ENCODE measurements at regions of chr1 and their contacts with region 1.

Region 1: DNA sequence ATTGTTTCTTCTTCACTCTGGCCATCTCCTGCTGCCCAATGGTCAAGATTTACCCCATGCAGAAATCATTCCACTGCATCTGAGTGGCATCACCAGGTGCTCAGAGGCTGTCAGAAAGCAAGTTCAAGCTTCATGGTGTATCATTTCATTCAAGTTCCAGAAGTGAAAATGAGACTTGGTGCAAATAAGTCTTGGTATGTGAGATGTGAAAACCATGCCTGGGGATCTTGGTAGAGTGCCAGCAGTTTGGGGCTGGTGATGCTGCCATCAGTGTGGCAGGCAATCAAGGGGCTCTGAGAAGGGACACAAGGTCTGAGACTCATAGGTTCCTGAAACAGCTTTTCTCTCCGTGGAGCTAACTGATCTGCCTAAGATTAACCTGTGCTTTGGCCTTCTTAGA is 52.0 kb downstream of the CD2 start:
- DNase-seq: peak; percentile 91
- H3K4me3 Mint-ChIP-seq: peak overlapping the region; percentile 79
- H3K27ac Mint-ChIP-seq: peak overlapping the region; percentile 99
- H3K4me1 Mint-ChIP-seq: peaks cover 78% of the 10 kb centered on the region
- H3K27me3 Mint-ChIP-seq: no peaks in the 10 kb centered on the region

Region 2: GRCh38 chr1:116754198-116754977 is 51.9 kb before region 1 on chr1 and contains the start of gene CD2:
- CTCF ChIA-PET with region 1: interaction called, 5 read pairs
- POLR2A ChIA-PET with region 1: interaction called, 1,099 read pairs
- intact Hi-C with region 1: loop called (anchors 1 kb)
- DNase-seq: peak; percentile 78
- H3K4me3 Mint-ChIP-seq: peak within 1 kb of the TSS; percentile 99
- H3K27ac Mint-ChIP-seq: peak within 1 kb of the TSS; percentile 99
- H3K4me1 Mint-ChIP-seq: peaks cover 40% of the 10 kb centered on the region
- H3K27me3 Mint-ChIP-seq: no peaks in the 10 kb centered on the region
- total RNA-seq, gene CD2: 335 to 355 TPM

Region 3: GRCh38 chr1:116794804-116795481 is 11.3 kb before region 1 on chr1:
- CTCF ChIA-PET with region 1: no interaction called
- POLR2A ChIA-PET with region 1: interaction called, 30 read pairs
- intact Hi-C with region 1: no loop called
- DNase-seq: no peak
- H3K4me3 Mint-ChIP-seq: no peak overlapping the region
- H3K27ac Mint-ChIP-seq: peak overlapping the region; percentile 40
- H3K4me1 Mint-ChIP-seq: peaks cover 66% of the 10 kb centered on the region
- H3K27me3 Mint-ChIP-seq: no peaks in the 10 kb centered on the region

Measured in activated CD4-positive, alpha-beta memory T cell treated with anti-CD3 and anti-CD28 coated beads for 36 hours (primary cell).